Activated T-helper 2 cell treated with anti-CD3 and anti-CD28 coated beads, Interferon-gamma antibody, Interleukin-2, Interleukin-4, amounts not matched to agents 10 μg/mL and 5 μg/mL and 100 μg/mL, durations not matched to agents 14 hours and 24 hours and 36 hours (primary cell): ENCODE measurements at regions of chr12 and their contacts with region 1.

Region 1: DNA sequence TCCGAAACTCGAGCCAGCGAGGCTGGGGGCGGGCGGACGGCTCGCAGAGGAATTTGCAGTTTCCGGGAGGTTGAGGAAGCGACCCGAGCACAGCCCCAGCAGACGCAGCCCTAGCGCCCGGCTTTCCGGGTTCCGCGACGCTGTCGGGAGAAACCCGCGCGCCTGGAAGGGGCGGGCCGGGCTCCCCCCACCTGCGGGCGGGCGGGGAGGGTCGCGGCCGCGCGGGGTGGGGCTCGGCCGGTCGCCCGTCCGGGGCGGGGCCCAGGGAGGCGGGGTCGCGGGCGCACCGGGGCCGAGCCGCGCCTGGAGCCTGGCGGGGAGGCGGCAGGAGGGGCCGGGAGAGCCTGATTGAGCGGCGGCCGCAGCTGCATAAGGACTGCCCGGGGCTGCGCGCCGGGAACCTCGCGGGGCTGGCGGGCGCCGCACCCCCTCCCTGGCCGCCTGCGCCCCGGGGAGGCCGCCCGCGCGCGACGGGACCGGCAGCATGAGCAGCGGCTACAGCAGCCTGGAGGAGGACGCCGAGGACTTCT is at the start of gene RASSF3:
- DNase-seq: peak; percentile 76
- H3K4me3 Mint-ChIP-seq: peak within 1 kb of the TSS; percentile 92
- H3K27ac Mint-ChIP-seq: peak within 1 kb of the TSS; percentile 87
- H3K4me1 Mint-ChIP-seq: peaks cover 29% of the 10 kb centered on the region
- H3K27me3 Mint-ChIP-seq: no peaks in the 10 kb centered on the region
- total RNA-seq, gene RASSF3: 35.7 and 35.8 TPM in 2 replicates

Region 2: DNA sequence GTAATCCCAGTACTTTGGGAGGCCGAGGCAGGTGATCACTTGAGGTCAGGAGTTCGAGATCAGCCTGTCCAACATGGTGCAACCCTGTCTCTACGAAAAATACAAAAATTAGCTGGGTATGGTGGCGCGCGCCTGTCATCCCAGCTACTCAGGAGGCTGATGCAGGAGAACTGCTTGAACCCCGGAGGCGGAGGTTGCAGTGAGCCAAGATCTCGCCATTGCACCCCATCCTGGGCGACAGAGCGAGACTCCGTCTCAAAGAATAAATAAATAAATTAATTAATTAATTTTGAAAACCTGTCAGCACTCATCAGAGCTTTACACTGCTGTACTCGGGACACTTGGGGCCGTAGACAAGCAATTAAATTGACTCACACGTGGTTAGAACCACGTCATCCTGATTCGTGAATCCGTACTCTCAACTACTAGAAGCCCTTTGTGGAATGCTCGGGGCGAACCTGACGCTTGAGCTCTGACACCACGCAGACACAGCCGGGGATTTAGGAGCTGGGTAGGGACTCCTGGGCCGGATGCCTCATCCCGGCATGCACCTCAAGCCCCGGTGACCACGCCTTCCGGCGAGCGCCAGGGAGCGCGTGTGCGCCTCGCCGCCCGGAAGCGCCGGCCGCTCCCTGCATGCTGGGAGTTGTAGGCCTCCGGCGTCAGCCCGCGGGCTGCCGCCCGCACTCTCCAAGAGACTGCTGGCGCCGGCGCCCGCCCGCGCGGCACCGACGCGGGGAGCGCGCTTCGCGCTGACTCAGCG is 206.3 kb before region 1 on chr12 and contains the start of gene XPOT:
- intact Hi-C with region 1: loop called (anchors 5 kb)
- DNase-seq: peak; percentile 92
- H3K4me3 Mint-ChIP-seq: peak within 1 kb of the TSS; percentile 93
- H3K27ac Mint-ChIP-seq: peak within 1 kb of the TSS; percentile 97
- H3K4me1 Mint-ChIP-seq: peaks cover 31% of the 10 kb centered on the region
- H3K27me3 Mint-ChIP-seq: no peaks in the 10 kb centered on the region
- total RNA-seq, gene XPOT: 119 and 120 TPM in 2 replicates

Region 3: DNA sequence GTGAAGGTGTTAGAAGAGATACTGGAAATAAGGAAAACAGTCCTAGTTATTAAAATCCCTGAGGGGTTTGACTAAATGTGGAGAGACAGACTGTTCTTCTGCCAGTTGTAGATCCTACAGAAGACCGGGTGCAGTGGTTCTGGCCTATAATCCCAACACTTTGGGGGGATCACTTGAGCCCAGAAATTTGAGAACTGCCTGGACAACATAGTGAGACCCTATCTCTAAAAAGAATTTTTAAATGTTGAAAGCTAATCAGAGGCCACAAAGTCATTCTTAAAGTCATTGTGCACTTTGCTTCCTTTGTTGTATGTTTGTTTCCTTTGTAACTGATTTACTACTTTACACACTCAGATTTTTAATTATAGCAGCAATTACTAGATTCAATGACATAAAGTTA is 61.1 kb before region 1 on chr12:
- intact Hi-C with region 1: loop called (anchors 2 kb)
- DNase-seq: no peak
- H3K4me3 Mint-ChIP-seq: no peak overlapping the region
- H3K27ac Mint-ChIP-seq: no peak overlapping the region
- H3K4me1 Mint-ChIP-seq: peaks cover 3% of the 10 kb centered on the region
- H3K27me3 Mint-ChIP-seq: peaks cover 7% of the 10 kb centered on the region

Region 4: GRCh38 chr12:64669270-64669842 is 59.1 kb after region 1 on chr12:
- intact Hi-C with region 1: loop called (anchors 1 kb)
- DNase-seq: peak; percentile 43
- H3K4me3 Mint-ChIP-seq: peak overlapping the region; percentile 87
- H3K27ac Mint-ChIP-seq: peak overlapping the region; percentile 97
- H3K4me1 Mint-ChIP-seq: peaks cover 87% of the 10 kb centered on the region
- H3K27me3 Mint-ChIP-seq: no peaks in the 10 kb centered on the region

Region 5: GRCh38 chr12:64696080-64696741 is 86.0 kb after region 1 on chr12:
- intact Hi-C with region 1: loop called (anchors 1 kb)
- DNase-seq: no peak
- H3K4me3 Mint-ChIP-seq: no peak overlapping the region
- H3K27ac Mint-ChIP-seq: no peak overlapping the region
- H3K4me1 Mint-ChIP-seq: peaks cover 39% of the 10 kb centered on the region
- H3K27me3 Mint-ChIP-seq: no peaks in the 10 kb centered on the region

Region 6: GRCh38 chr12:64773386-64773785 is 163.2 kb after region 1 on chr12:
- intact Hi-C with region 1: no loop called
- DNase-seq: no peak
- H3K4me3 Mint-ChIP-seq: no peak overlapping the region
- H3K27ac Mint-ChIP-seq: no peak overlapping the region
- H3K4me1 Mint-ChIP-seq: no peaks in the 10 kb centered on the region
- H3K27me3 Mint-ChIP-seq: peaks cover 41% of the 10 kb centered on the region

Region 7: DNA sequence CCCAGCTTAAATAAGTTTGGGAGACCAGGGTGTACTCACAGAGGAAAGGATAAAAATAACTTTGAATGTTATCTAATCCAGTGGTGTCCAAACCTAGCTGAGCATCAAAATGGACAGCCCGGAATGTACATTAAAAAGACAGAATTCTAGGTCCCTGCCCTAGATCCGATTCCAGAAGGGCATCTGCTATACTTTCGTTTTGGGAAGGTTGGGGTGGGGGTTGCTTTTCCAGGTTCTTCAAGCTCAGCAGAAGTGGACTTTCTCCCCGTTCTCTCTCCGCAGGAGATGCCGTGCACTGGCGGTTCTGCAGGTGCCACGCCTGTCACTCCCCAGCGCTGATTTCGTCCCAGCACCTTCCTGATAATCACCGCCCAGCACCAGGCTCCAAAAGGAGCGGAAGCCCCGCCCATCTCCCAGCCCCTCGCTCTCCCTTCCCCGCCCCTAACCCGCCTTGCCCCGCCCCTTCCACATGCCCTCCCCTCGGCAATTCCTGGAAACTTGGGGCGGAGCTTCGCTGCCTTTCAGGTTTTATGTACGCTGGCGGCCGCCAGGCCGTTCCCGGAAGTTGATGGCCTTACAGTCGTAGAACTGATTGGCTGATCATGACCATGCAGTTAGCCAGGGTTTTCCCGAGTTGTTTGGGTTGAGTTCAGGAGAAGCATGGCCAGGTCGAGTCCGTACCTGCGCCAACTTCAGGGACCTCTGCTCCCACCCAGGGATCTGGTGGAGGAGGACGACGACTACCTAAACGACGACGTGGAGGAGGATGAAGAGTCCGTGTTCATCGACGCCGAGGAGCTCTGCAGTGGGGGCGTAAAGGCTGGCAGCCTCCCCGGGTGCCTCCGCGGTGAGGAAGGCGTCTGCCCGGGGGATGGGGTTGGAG is 1692.0 kb after region 1 on chr12 and contains the start of gene HELB:
- intact Hi-C with region 1: loop called (anchors 5 kb)
- DNase-seq: peak; percentile 91
- H3K4me3 Mint-ChIP-seq: peak within 1 kb of the TSS; percentile 98
- H3K27ac Mint-ChIP-seq: peak within 1 kb of the TSS; percentile 99
- H3K4me1 Mint-ChIP-seq: peaks cover 48% of the 10 kb centered on the region
- H3K27me3 Mint-ChIP-seq: peaks cover 2% of the 10 kb centered on the region
- total RNA-seq, gene HELB: 17.1 and 18.2 TPM in 2 replicates